Activated T-helper 1 cell treated with anti-CD3 and anti-CD28 coated beads, Interleukin-12 subunit alpha, Interleukin-12 subunit beta, Interleukin-2, Interleukin-4 antibody, amounts not matched to agents 30 ng/mL and 10 ng/mL and 1 ng/mL, durations not matched to agents 14 hours and 24 hours and 36 hours (primary cell): ENCODE measurements at regions of chr3 and their contacts with region 1.

Region 1: DNA sequence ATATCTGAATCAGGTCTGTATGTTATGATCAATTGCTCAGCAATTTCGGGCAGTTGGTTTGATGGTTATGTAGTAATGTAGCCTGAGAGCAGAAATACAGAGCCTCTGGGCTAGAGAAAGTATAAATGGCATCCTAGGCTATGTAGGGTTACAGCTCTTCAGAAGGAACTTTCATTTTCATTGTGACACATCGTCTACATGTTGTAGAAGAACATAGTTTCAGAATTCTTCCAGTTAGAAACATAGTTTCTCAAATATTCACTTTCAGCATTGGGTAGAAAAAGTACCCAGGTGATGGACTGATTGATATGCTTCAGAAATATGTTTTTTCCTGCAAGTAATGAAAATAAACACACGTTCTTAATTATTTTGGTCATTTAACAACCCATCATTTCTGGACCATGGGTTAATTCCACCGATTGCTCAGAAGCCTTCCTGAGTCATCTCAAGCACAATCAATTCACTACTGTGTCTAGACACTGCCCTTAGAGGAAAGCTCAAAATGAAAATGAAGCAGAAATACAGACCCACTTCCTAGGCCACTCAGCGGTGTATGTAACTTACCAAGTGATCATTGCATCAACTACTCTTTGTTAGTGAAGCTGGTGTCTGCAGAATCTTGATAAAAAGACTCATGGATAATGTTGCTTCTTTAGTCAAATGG is 88.8 kb upstream of the TSEN2 start:
- DNase-seq: no peak
- H3K4me3 Mint-ChIP-seq: peak overlapping the region; percentile 53
- H3K27ac Mint-ChIP-seq: peak overlapping the region; percentile 62
- H3K4me1 Mint-ChIP-seq: peaks cover 12% of the 10 kb centered on the region
- H3K27me3 Mint-ChIP-seq: peaks cover 19% of the 10 kb centered on the region

Region 2: DNA sequence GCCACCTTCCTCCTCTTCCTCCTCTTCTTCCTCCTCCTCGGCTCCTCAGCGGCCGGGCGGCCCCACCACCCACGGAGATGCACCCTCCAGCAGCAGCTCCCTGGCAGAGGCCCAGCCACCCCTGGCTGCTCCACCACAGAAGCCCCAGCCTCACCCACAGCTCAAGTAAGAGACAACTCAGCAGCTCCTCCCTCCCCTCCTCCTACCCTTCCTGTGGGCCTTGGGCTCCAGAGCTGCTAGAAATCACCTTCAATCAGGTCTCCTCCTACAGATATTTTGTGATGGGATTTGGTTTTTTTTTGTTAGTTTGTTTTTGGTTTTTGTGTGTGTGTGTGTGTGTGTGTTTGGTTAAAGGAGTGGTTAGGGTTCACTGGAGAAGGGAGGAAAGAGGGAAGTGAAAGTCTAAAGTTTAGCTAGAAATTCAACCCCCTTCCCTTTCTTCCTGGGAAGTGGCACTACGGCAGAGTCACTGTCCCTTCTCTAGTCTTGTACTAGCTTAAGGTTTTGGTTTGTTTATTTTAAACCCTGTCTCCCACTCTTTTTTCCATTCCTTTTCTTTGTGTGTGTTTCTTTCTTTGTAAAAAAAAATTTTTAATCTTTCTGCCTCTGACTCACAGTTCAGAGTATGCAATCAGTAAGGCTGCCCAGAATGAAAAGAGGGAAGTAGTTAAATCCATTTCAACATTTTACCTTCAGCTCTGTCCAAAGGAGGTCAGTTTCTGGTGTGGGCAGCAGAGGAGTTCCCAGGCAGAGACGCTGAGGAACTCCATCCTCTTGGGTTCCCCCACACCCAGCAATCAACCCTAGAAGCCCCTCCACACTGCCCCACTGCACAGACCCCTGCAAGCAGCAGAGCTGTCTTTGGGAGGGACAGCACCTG is 207.8 kb before region 1 on chr3:
- intact Hi-C with region 1: loop called (anchors 1 kb)
- DNase-seq: peak; percentile 56
- H3K4me3 Mint-ChIP-seq: peak overlapping the region; percentile 21
- H3K27ac Mint-ChIP-seq: peak overlapping the region; percentile 94
- H3K4me1 Mint-ChIP-seq: peaks cover 90% of the 10 kb centered on the region
- H3K27me3 Mint-ChIP-seq: peaks cover under 1% of the 10 kb centered on the region

Region 3: DNA sequence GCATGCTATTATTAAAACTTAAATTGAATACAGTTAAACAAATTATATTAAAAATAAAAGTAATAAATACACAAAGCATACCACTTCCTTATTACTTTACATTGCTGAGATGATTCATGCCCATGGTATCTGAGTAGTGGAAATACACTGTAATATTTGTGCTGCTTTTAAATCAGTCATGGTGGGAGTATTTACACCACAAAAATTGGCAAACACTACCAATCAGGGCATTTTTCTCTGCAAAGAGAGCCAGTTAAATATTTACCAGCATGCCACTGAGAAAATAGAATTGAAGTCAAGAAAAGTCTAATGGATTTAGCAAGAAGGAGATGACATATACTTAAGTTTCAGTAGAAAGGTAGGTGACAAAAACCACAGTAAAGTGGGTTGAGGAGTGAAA is 87.0 kb before region 1 on chr3:
- intact Hi-C with region 1: loop called (anchors 2 kb)
- DNase-seq: no peak
- H3K4me3 Mint-ChIP-seq: no peak overlapping the region
- H3K27ac Mint-ChIP-seq: no peak overlapping the region
- H3K4me1 Mint-ChIP-seq: no peaks in the 10 kb centered on the region
- H3K27me3 Mint-ChIP-seq: peaks cover 12% of the 10 kb centered on the region

Region 4: DNA sequence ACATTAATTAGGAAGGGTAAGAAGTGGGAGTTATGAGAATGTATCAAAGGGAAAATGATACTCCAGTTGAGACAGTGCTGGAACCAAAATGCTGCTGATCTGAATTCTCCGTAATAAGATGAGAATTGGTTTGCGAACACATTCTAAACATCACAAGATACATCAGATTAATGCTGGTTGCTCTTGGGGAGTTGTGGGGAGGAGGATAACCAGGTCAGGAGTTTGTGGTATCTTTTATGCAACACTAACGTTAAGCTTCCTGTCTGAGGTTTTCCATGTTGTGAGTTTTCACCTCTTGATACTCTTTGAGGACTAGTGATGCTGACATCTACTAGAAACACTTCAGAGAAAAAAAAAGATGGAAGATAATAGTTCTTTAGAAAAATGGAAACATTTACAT is 59.4 kb before region 1 on chr3:
- intact Hi-C with region 1: loop called (anchors 10 kb)
- DNase-seq: no peak
- H3K4me3 Mint-ChIP-seq: peak overlapping the region; percentile 8
- H3K27ac Mint-ChIP-seq: peak overlapping the region; percentile 3
- H3K4me1 Mint-ChIP-seq: peaks cover 16% of the 10 kb centered on the region
- H3K27me3 Mint-ChIP-seq: peaks cover 2% of the 10 kb centered on the region

Region 5: DNA sequence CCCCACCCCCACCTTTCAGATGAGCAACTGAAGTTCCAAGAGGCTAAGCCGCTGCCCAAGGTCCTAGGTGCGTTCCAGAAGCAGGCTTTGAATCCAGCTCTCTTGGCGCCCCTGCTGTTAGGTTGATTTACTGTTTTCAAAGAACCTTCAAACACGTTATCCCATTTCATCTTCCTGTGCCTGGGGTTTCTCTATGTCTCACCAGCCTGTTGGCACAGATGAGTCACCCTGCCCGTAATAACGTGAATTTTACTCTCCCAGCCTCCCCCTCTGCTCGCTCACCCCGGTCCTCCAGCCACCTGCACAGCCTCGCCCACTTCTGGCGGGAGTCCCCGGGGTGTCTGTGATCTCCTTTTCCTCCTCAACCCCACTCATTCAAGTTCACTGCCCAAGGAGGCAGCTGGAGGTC is 75.8 kb after region 1 on chr3:
- intact Hi-C with region 1: loop called (anchors 1 kb)
- DNase-seq: peak; percentile 14
- H3K4me3 Mint-ChIP-seq: no peak overlapping the region
- H3K27ac Mint-ChIP-seq: no peak overlapping the region
- H3K4me1 Mint-ChIP-seq: peaks cover 11% of the 10 kb centered on the region
- H3K27me3 Mint-ChIP-seq: no peaks in the 10 kb centered on the region